ENCODE measurements at regions of chr6 and their contacts with region 1.

Region 1: DNA sequence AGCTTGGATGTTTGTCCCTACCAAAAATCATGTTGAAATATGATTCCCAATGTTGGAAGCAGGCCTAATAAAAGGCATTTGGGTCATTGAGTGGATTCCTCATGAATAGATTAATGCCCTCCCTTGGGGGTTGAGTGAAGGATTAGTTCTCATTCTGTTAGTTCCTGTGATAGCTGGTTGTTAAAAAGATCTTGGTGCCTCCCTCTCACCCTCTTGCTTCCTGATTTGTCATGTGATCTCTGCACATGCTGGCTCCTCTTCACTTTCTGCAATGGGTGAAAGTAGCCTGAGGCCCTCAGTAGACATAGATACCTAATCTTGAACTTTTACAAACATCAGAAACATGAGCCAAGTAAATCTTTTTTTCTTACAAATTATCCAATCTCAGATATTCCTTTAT is 115.6 kb upstream of the HCRTR2 start:
- DNase-seq: no peak
- ATAC-seq: no peak
- H3K4me3 ChIP-seq: no peak overlapping the region
- H3K4me3 Mint-ChIP-seq: no peak overlapping the region
- H3K27ac ChIP-seq: no peak overlapping the region
- H3K27ac Mint-ChIP-seq: no peak overlapping the region
- H3K4me1 ChIP-seq: no peaks in the 10 kb centered on the region
- H3K4me1 Mint-ChIP-seq: no peaks in the 10 kb centered on the region
- H3K27me3 ChIP-seq: no peaks in the 10 kb centered on the region
- H3K27me3 Mint-ChIP-seq: no peaks in the 10 kb centered on the region

Region 2: GRCh38 chr6:55040102-55040848 is 18.4 kb before region 1 on chr6:
- CTCF ChIA-PET with region 1: no interaction called
- POLR2A ChIA-PET with region 1: no interaction called
- intact Hi-C with region 1: loop called in 1 of 2 experiments (anchors 1 kb)
- DNase-seq: no peak
- ATAC-seq: peak; percentile 86
- H3K4me3 ChIP-seq: no peak overlapping the region
- H3K4me3 Mint-ChIP-seq: no peak overlapping the region
- H3K27ac ChIP-seq: no peak overlapping the region
- H3K27ac Mint-ChIP-seq: no peak overlapping the region
- H3K4me1 ChIP-seq: no peaks in the 10 kb centered on the region
- H3K4me1 Mint-ChIP-seq: no peaks in the 10 kb centered on the region
- H3K27me3 ChIP-seq: no peaks in the 10 kb centered on the region
- H3K27me3 Mint-ChIP-seq: no peaks in the 10 kb centered on the region